HEK293 (cell line): ENCODE measurements at regions of chr1 and their contacts with region 1.

Region 1: GRCh38 chr1:181479137-181479745 is 4.1 kb upstream of the CACNA1E start:
- H3K4me3 ChIP-seq: no peak overlapping the region
- H3K27ac ChIP-seq: no peak overlapping the region
- H3K4me1 ChIP-seq: no peaks in the 10 kb centered on the region; the same call in 1 of the 2 replicates
- CTCF ChIP-seq: peak; percentile 64; the same call in 1 of the 2 replicates

Region 2: GRCh38 chr1:181504399-181504842 is 25.2 kb after region 1 on chr1:
- CTCF ChIA-PET with region 1: interaction called, 10 read pairs
- POLR2A ChIA-PET with region 1: no interaction called
- H3K4me3 ChIP-seq: no peak overlapping the region
- H3K27ac ChIP-seq: no peak overlapping the region
- H3K4me1 ChIP-seq: no peaks in the 10 kb centered on the region
- CTCF ChIP-seq: no peak

Region 3: DNA sequence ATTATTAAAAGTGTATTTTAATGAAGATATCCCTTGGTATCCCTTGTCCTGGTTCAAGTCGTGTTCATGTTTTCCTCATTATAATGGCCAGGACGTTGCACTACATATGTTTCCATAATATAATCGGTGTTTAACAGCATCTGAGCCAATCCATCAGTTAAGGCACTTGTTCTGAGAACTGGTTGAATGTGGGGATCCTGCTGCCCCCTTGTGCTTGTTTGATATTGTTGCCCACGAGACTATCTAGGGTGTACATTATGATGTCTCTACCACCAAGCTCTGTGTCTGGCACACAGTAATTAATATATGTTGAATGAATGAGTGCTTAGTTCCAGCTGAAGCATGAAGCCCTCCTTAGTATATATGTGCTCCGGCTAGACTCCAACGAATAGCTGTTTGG is 197.0 kb after region 1 on chr1:
- CTCF ChIA-PET with region 1: interaction called, 21 read pairs
- POLR2A ChIA-PET with region 1: no interaction called
- H3K4me3 ChIP-seq: no peak overlapping the region
- H3K27ac ChIP-seq: no peak overlapping the region
- H3K4me1 ChIP-seq: no peaks in the 10 kb centered on the region
- CTCF ChIP-seq: peak; percentile 19; the same call in 1 of the 2 replicates

Region 4: GRCh38 chr1:181855380-181855779 is 376.1 kb after region 1 on chr1:
- CTCF ChIA-PET with region 1: no interaction called
- POLR2A ChIA-PET with region 1: no interaction called
- H3K4me3 ChIP-seq: no peak overlapping the region
- H3K27ac ChIP-seq: no peak overlapping the region
- H3K4me1 ChIP-seq: no peaks in the 10 kb centered on the region
- CTCF ChIP-seq: no peak

Region 5: GRCh38 chr1:181931873-181932272 is 452.6 kb after region 1 on chr1:
- CTCF ChIA-PET with region 1: interaction called, 150 read pairs
- POLR2A ChIA-PET with region 1: no interaction called
- H3K4me3 ChIP-seq: no peak overlapping the region
- H3K27ac ChIP-seq: no peak overlapping the region
- H3K4me1 ChIP-seq: no peaks in the 10 kb centered on the region
- CTCF ChIP-seq: no peak

Region 6: DNA sequence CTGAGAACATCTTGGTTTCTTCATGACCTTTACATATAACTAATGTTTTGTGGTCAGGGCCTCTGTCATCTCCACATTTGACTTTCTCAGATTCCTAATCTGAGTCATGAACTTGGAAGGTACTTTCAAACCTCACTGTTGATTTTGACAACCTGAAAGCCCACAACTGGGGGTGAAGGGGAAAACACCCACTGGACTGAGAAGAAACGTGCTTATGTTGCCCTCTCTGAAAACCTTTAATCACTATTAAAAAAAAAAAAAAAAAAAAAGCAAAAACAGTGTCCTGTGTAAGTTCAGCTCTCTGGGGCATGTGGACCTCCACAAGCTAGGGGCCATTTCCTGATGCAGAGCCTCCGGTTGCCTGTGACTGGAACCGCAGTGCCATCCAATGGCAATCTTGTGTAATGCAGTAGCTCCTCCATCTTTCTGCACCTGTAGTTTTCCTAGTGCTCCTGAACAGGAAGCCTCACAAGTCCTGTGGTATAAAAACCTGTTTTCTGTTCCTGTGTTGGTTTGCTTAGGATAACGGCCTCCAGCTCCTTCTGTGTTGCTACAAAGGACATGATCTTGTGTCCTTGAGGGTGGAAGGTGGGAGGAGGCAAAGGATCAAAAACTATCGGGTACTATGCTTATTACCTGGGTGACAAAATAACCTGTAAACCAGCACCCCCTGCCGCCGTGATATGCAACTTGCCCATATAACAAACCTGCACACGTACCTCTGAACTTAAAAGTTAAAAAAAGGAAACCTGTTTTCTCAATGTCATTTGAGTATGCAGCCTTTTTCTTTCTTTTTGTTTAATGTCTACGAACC is 457.7 kb after region 1 on chr1:
- CTCF ChIA-PET with region 1: interaction called, 150 read pairs
- POLR2A ChIA-PET with region 1: no interaction called
- H3K4me3 ChIP-seq: peak overlapping the region; percentile 18; the same call in 1 of the 2 replicates
- H3K27ac ChIP-seq: no peak overlapping the region
- H3K4me1 ChIP-seq: no peaks in the 10 kb centered on the region
- CTCF ChIP-seq: peak; percentile 67; the same call in 1 of the 2 replicates